CD8-positive, alpha-beta T cell (primary cell): ENCODE measurements at regions of chr14 and their contacts with region 1.

Region 1: GRCh38 chr14:99982537-99983250 is 82.5 kb upstream of the EVL start:
- DNase-seq: peak; percentile 30 to 85 (median 65)
- ATAC-seq: peak; percentile 100
- H3K4me3 ChIP-seq: no peak overlapping the region
- H3K4me3 Mint-ChIP-seq: no peak overlapping the region
- H3K27ac ChIP-seq: no peak overlapping the region
- H3K27ac Mint-ChIP-seq: no peak overlapping the region
- H3K4me1 ChIP-seq: peaks cover 10% of the 10 kb centered on the region
- H3K4me1 Mint-ChIP-seq: peaks cover 12% of the 10 kb centered on the region
- H3K27me3 ChIP-seq: no peaks in the 10 kb centered on the region
- H3K27me3 Mint-ChIP-seq: no peaks in the 10 kb centered on the region
- CTCF ChIP-seq: peak; percentile 95

Region 2: GRCh38 chr14:99995700-99996356 is 13.1 kb after region 1 on chr14:
- CTCF ChIA-PET with region 1: interaction called, 10 read pairs
- POLR2A ChIA-PET with region 1: no interaction called
- intact Hi-C with region 1: no loop called
- DNase-seq: peak; percentile 33 to 80 (median 71)
- ATAC-seq: peak; percentile 98
- H3K4me3 ChIP-seq: no peak overlapping the region
- H3K4me3 Mint-ChIP-seq: no peak overlapping the region
- H3K27ac ChIP-seq: no peak overlapping the region
- H3K27ac Mint-ChIP-seq: no peak overlapping the region
- H3K4me1 ChIP-seq: no peaks in the 10 kb centered on the region
- H3K4me1 Mint-ChIP-seq: peaks cover 3% of the 10 kb centered on the region
- H3K27me3 ChIP-seq: no peaks in the 10 kb centered on the region
- H3K27me3 Mint-ChIP-seq: peaks cover 2% of the 10 kb centered on the region
- CTCF ChIP-seq: peak; percentile 86

Region 3: GRCh38 chr14:100025111-100025510 is 42.4 kb after region 1 on chr14:
- CTCF ChIA-PET with region 1: interaction called, 10 read pairs
- POLR2A ChIA-PET with region 1: no interaction called
- intact Hi-C with region 1: loop called in 1 of 2 experiments (anchors 2 kb)
- DNase-seq: peak in 5 of 9 experiments; percentile 10 to 49 (median 22)
- ATAC-seq: peak; percentile 62
- H3K4me3 ChIP-seq: no peak overlapping the region
- H3K4me3 Mint-ChIP-seq: no peak overlapping the region
- H3K27ac ChIP-seq: no peak overlapping the region
- H3K27ac Mint-ChIP-seq: no peak overlapping the region
- H3K4me1 ChIP-seq: no peaks in the 10 kb centered on the region
- H3K4me1 Mint-ChIP-seq: peaks cover 5% of the 10 kb centered on the region
- H3K27me3 ChIP-seq: no peaks in the 10 kb centered on the region
- H3K27me3 Mint-ChIP-seq: no peaks in the 10 kb centered on the region
- CTCF ChIP-seq: no peak

Region 4: GRCh38 chr14:100056964-100057795 is 74.5 kb after region 1 on chr14:
- CTCF ChIA-PET with region 1: interaction called, 5 read pairs
- POLR2A ChIA-PET with region 1: no interaction called
- intact Hi-C with region 1: loop called in 1 of 2 experiments (anchors 2 kb)
- DNase-seq: peak in 4 of 9 experiments; percentile 35 to 84 (median 62)
- ATAC-seq: peak; percentile 71
- H3K4me3 ChIP-seq: no peak overlapping the region
- H3K4me3 Mint-ChIP-seq: peak overlapping the region; percentile 21
- H3K27ac ChIP-seq: peak overlapping the region in 1 of 2 experiments; percentile 12
- H3K27ac Mint-ChIP-seq: peak overlapping the region; percentile 94
- H3K4me1 ChIP-seq: peaks cover 57% of the 10 kb centered on the region
- H3K4me1 Mint-ChIP-seq: peaks cover 54% of the 10 kb centered on the region
- H3K27me3 ChIP-seq: no peaks in the 10 kb centered on the region
- H3K27me3 Mint-ChIP-seq: no peaks in the 10 kb centered on the region
- CTCF ChIP-seq: peak; percentile 77

Region 5: DNA sequence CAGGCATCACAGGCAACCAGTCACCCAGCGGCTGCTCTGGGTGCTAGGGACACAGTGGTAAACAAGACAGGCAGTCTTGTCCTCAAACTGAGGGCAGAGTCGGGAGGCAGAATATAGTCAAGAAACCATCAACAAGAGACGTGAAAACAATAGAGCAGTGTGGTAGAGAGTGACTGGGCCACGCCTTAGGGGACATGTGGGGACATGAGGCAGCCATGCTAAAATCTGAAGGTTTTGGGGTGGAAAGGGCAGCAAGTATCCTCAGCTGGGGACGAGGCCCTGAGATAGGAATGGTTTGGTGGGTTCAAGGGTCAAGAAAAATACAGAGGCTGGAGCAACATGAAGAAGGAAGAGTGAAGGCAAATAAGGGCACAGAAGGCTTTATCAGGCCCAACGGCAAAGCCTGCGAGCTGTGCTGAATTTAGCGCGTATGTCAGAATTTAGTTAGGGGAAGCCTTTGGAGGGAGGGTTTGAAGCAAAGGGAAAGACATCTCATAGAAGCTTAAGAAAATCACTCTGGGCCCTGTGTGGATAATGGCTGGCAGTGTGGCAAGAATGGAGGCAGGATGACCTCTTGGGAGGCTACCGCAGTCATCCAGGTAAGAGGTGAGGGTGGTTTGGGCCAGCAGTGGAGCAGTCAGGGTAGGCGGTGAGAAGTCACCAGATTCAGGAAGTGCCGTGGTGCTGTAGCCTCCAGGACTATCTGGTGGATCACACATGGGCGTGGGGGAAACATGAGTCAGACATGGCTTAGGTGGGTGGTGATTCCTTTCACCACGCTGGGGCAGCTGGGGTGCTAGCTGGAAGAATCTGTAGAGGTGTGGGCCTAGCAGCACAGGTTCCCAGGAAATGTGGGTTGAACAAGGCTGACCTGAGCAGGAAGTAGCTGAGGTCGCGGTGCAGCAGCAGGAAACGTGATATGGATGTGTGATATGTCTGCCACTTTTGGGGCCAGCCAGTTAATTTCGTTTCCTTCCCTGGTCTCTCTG is 85.6 kb after region 1 on chr14:
- CTCF ChIA-PET with region 1: interaction called, 14 read pairs
- POLR2A ChIA-PET with region 1: no interaction called
- intact Hi-C with region 1: loop called in 1 of 2 experiments (anchors 2 kb)
- DNase-seq: peak; percentile 70 to 98 (median 88)
- ATAC-seq: peak; percentile 50
- H3K4me3 ChIP-seq: peak overlapping the region; percentile 73 to 85
- H3K4me3 Mint-ChIP-seq: peak overlapping the region; percentile 100
- H3K27ac ChIP-seq: peak overlapping the region; percentile 83 to 87
- H3K27ac Mint-ChIP-seq: peak overlapping the region; percentile 99
- H3K4me1 ChIP-seq: peaks cover 59% of the 10 kb centered on the region
- H3K4me1 Mint-ChIP-seq: peaks cover 82% of the 10 kb centered on the region
- H3K27me3 ChIP-seq: no peaks in the 10 kb centered on the region
- H3K27me3 Mint-ChIP-seq: no peaks in the 10 kb centered on the region
- CTCF ChIP-seq: no peak

Region 6: GRCh38 chr14:100246826-100247428 is 264.2 kb after region 1 on chr14:
- CTCF ChIA-PET with region 1: interaction called, 7 read pairs
- POLR2A ChIA-PET with region 1: no interaction called
- intact Hi-C with region 1: loop called in 1 of 2 experiments (anchors 1 kb)
- DNase-seq: peak in 2 of 9 experiments; percentile 58 to 71
- ATAC-seq: peak; percentile 62
- H3K4me3 ChIP-seq: no peak overlapping the region
- H3K4me3 Mint-ChIP-seq: peak overlapping the region; percentile 61
- H3K27ac ChIP-seq: peak overlapping the region in 1 of 2 experiments; percentile 36
- H3K27ac Mint-ChIP-seq: peak overlapping the region; percentile 85
- H3K4me1 ChIP-seq: peaks cover 73% of the 10 kb centered on the region
- H3K4me1 Mint-ChIP-seq: peaks cover 81% of the 10 kb centered on the region
- H3K27me3 ChIP-seq: no peaks in the 10 kb centered on the region
- H3K27me3 Mint-ChIP-seq: no peaks in the 10 kb centered on the region
- CTCF ChIP-seq: no peak

Region 7: DNA sequence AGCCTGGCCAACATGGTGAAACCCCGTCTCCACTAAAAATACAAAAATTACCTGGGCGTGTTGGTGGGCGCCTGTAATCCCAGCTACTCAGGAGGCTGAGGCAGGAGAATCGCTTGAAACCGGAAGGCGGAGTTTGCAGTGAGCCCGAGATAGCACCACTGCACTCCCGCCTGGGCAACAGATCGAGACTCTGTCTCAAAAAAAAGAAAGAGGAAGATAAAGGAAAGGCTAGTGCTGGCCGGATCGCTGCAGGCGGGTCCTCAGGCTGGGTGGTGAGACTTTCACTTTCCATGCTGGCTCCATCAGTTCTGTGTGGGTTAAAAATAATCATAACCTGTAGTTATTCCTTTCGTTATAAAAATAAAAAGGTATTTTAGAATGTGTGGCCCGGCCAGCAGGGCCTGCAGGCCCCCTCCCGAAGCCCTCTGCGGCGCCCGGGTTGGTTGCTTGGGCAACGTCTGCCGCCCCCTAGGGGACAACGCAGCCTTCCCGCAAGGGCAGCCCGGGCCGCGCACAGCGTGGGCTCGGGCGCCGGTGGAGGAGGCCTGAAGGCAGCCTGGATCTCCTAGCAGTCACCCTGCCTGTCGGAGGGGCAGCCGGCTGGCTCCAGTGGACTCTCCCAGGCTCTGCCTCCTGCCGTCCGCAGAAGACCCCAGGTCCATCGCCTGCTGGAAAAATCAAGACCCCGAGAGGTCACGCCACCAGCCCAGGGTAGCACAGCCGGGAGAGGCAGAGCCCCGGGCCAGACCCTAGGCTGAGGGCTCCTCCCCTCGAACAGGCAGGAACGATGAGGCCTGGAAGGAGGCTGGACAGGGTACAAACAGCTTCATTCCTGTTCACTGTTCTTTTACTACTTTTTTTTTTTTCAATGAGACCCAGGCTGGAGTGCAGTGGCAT is 335.5 kb after region 1 on chr14:
- CTCF ChIA-PET with region 1: no interaction called
- POLR2A ChIA-PET with region 1: no interaction called
- intact Hi-C with region 1: loop called (anchors 5 kb)
- DNase-seq: peak; percentile 43 to 87 (median 74)
- ATAC-seq: peak; percentile 99
- H3K4me3 ChIP-seq: peak overlapping the region; percentile 53 to 55
- H3K4me3 Mint-ChIP-seq: peak overlapping the region; percentile 76
- H3K27ac ChIP-seq: no peak overlapping the region
- H3K27ac Mint-ChIP-seq: no peak overlapping the region
- H3K4me1 ChIP-seq: peaks cover 8% of the 10 kb centered on the region
- H3K4me1 Mint-ChIP-seq: peaks cover 2% of the 10 kb centered on the region
- H3K27me3 ChIP-seq: no peaks in the 10 kb centered on the region
- H3K27me3 Mint-ChIP-seq: no peaks in the 10 kb centered on the region
- CTCF ChIP-seq: peak; percentile 75